ENCODE measurements at regions of chr2 and their contacts with region 1.

Region 1: DNA sequence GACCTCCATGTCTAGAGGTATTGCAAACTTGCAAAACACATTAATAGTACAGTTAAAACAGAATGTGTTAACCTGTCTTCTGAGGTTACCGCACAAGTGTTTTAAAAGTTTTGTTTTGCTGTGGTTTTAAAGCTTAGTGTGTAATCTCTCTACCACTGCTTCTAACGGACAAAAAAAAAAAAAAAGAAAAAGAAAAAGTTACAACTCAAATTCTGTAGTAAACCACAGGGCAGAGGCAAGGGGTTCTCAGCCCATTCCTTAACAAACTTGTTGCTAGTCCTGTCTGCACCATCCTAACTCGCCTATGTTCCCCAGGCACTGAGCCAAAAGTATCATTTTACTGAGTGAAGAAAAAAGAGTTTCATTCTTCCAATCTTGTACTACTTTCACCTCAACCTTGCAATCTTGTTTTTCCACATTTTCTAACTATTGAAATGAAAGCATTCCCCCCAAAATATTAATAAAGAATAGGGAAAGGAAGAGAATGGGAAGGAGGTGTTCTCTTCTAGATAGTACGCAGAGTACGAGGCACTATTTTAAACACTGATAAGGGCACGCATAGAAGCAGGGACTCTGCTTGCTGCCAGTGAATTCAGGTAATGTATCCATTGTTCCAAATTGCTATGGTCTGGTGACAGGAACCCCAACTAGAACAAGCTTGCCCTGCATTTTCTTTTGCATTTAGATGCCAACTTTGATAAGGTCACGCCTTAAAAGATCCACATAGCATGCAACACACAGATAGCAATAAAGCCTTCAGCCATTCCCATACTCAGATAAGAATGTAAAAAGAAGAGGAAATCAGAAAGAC is 47.1 kb downstream of the IKZF2 start:
- DNase-seq: peak; percentile 68
- H3K4me3 ChIP-seq: no peak overlapping the region
- H3K27ac ChIP-seq: no peak overlapping the region
- H3K4me1 ChIP-seq: peaks cover 30% of the 10 kb centered on the region
- H3K27me3 ChIP-seq: no peaks in the 10 kb centered on the region
- CTCF ChIP-seq: no peak

Region 2: GRCh38 chr2:213065583-213066442 is 38.5 kb before region 1 on chr2:
- CTCF ChIA-PET with region 1: no interaction called
- POLR2A ChIA-PET with region 1: no interaction called
- intact Hi-C with region 1: loop called (anchors 2 kb)
- DNase-seq: peak; percentile 54
- H3K4me3 ChIP-seq: peak overlapping the region; percentile 14
- H3K27ac ChIP-seq: no peak overlapping the region
- H3K4me1 ChIP-seq: peaks cover 72% of the 10 kb centered on the region
- H3K27me3 ChIP-seq: no peaks in the 10 kb centered on the region
- CTCF ChIP-seq: no peak